Dorsolateral prefrontal cortex (tissue), 120 donors: ENCODE measurements at regions of chr11 and their contacts with region 1.

Region 1: GRCh38 chr11:57456960-57457642 is 3.2 kb upstream of the RTN4RL2 start:
- DNase-seq: peak; percentile 82 to 93 (median 90)
- H3K4me3 ChIP-seq: peak overlapping the region in 13 of 59 donors; percentile 7 to 69 (median 21)
- H3K27ac ChIP-seq: no peak overlapping the region
- H3K27me3 ChIP-seq: peaks cover 0 to 43% (median 13%) of the 10 kb centered on the region in 45 donors
- CTCF ChIP-seq: peak; percentile 90 to 99 (median 98)

Region 2: DNA sequence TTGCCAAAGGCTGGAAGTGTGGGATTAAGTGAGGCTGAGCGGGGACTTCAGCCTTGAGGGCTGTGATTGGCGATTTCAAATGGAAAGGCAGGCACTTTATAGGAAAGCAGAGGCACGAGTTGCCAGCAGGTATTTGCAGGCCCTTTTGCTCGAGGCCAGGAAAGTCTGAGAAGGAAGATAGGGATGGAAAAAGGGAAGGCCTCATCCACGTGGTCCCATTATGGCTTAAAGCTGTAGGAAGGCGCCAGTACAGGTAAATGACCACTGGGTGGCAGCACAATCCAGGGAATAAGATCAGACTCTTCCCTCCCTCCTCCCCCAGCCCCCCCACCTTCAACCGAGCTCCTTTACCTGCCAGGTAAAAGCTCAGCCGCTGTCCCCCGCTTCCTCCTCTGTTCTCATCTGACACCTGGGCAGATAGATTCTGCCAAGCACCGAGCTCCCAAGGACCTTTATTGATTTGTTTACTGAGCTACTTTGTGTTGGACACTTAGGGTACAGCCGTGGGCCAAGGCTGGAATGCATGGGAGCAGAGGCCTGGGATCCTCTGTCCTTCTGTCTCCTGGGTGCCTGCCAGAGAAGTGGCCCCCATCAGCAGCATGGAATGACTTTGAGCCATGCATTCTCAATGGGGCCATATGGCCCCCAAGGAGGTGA is 111.4 kb before region 1 on chr11:
- intact Hi-C with region 1: loop called (anchors 5 to 10 kb)
- DNase-seq: peak in 9 of 10 donors; percentile 49 to 80 (median 74)
- H3K4me3 ChIP-seq: no peak overlapping the region
- H3K27ac ChIP-seq: peak overlapping the region in 1 of 59 donors; percentile 22
- H3K27me3 ChIP-seq: no peaks in the 10 kb centered on the region
- CTCF ChIP-seq: peak; percentile 52 to 93 (median 86)

Region 3: GRCh38 chr11:57667736-57668435 is 210.8 kb after region 1 on chr11 and contains the start of gene ZDHHC5:
- intact Hi-C with region 1: no loop called
- DNase-seq: peak; percentile 98 to 100 (median 99)
- H3K4me3 ChIP-seq: peak within 1 kb of the TSS; percentile 73 to 100 (median 96)
- H3K27ac ChIP-seq: peak within 1 kb of the TSS; percentile 93 to 100 (median 99)
- H3K27me3 ChIP-seq: no peaks in the 10 kb centered on the region
- CTCF ChIP-seq: peak in 55 of 56 donors; percentile 19 to 80 (median 60)
- total RNA-seq, gene ZDHHC5: 21.3 to 46.9 (median 34.3) TPM

Region 4: GRCh38 chr11:58513747-58514367 is 1056.8 kb after region 1 on chr11:
- intact Hi-C with region 1: loop called in 1 of 2 experiments (anchors 10 kb)
- DNase-seq: peak in 5 of 10 donors; percentile 32 to 55 (median 42)
- H3K4me3 ChIP-seq: peak overlapping the region in 1 of 59 donors; percentile 21
- H3K27ac ChIP-seq: peak overlapping the region in 2 of 59 donors; percentile 38 to 40
- H3K27me3 ChIP-seq: no peaks in the 10 kb centered on the region
- CTCF ChIP-seq: peak; percentile 50 to 83 (median 70)